Calu3 (cell line): ENCODE measurements at regions of chr2 and their contacts with region 1.

Region 1: GRCh38 chr2:157492189-157492773 is 48.4 kb upstream of the CYTIP start:
- DNase-seq: peak; percentile 76
- H3K4me3 Mint-ChIP-seq: no peak overlapping the region
- H3K27ac Mint-ChIP-seq: no peak overlapping the region
- H3K4me1 Mint-ChIP-seq: peaks cover 27% of the 10 kb centered on the region
- H3K27me3 Mint-ChIP-seq: peaks cover 13% of the 10 kb centered on the region
- CTCF ChIP-seq: peak; percentile 49

Region 2: GRCh38 chr2:156165742-156166141 is 1326.5 kb before region 1 on chr2:
- CTCF ChIA-PET with region 1: no interaction called
- intact Hi-C with region 1: no loop called
- DNase-seq: no peak
- H3K4me3 Mint-ChIP-seq: no peak overlapping the region
- H3K27ac Mint-ChIP-seq: no peak overlapping the region
- H3K4me1 Mint-ChIP-seq: peaks cover 6% of the 10 kb centered on the region
- H3K27me3 Mint-ChIP-seq: no peaks in the 10 kb centered on the region
- CTCF ChIP-seq: no peak

Region 3: GRCh38 chr2:157327621-157328500 is 164.4 kb before region 1 on chr2:
- CTCF ChIA-PET with region 1: interaction called, 3 read pairs
- intact Hi-C with region 1: loop called (anchors 5 kb)
- DNase-seq: peak; percentile 84
- H3K4me3 Mint-ChIP-seq: no peak overlapping the region
- H3K27ac Mint-ChIP-seq: no peak overlapping the region
- H3K4me1 Mint-ChIP-seq: peaks cover 19% of the 10 kb centered on the region
- H3K27me3 Mint-ChIP-seq: no peaks in the 10 kb centered on the region
- CTCF ChIP-seq: peak; percentile 93

Region 4: GRCh38 chr2:157747695-157748370 is 255.6 kb after region 1 on chr2:
- CTCF ChIA-PET with region 1: no interaction called
- intact Hi-C with region 1: loop called (anchors 10 kb)
- DNase-seq: no peak
- H3K4me3 Mint-ChIP-seq: no peak overlapping the region
- H3K27ac Mint-ChIP-seq: no peak overlapping the region
- H3K4me1 Mint-ChIP-seq: peaks cover 12% of the 10 kb centered on the region
- H3K27me3 Mint-ChIP-seq: no peaks in the 10 kb centered on the region
- CTCF ChIP-seq: no peak